Activated CD4-positive, alpha-beta T cell treated with anti-CD3 and anti-CD28 coated beads for 36 hours (primary cell): ENCODE measurements at regions of chr3 and their contacts with region 1.

Region 1: GRCh38 chr3:72692990-72693389 is 155.3 kb downstream of the SHQ1 start:
- DNase-seq: no peak
- ATAC-seq: no peak
- H3K4me3 Mint-ChIP-seq: no peak overlapping the region
- H3K27ac Mint-ChIP-seq: no peak overlapping the region
- H3K4me1 Mint-ChIP-seq: no peaks in the 10 kb centered on the region
- H3K27me3 Mint-ChIP-seq: no peaks in the 10 kb centered on the region

Region 2: GRCh38 chr3:72203105-72203504 is 489.9 kb before region 1 on chr3:
- CTCF ChIA-PET with region 1: no interaction called
- POLR2A ChIA-PET with region 1: interaction called, 13 read pairs
- intact Hi-C with region 1: no loop called
- DNase-seq: no peak
- ATAC-seq: no peak
- H3K4me3 Mint-ChIP-seq: no peak overlapping the region
- H3K27ac Mint-ChIP-seq: no peak overlapping the region
- H3K4me1 Mint-ChIP-seq: no peaks in the 10 kb centered on the region
- H3K27me3 Mint-ChIP-seq: peaks cover 3% of the 10 kb centered on the region

Region 3: DNA sequence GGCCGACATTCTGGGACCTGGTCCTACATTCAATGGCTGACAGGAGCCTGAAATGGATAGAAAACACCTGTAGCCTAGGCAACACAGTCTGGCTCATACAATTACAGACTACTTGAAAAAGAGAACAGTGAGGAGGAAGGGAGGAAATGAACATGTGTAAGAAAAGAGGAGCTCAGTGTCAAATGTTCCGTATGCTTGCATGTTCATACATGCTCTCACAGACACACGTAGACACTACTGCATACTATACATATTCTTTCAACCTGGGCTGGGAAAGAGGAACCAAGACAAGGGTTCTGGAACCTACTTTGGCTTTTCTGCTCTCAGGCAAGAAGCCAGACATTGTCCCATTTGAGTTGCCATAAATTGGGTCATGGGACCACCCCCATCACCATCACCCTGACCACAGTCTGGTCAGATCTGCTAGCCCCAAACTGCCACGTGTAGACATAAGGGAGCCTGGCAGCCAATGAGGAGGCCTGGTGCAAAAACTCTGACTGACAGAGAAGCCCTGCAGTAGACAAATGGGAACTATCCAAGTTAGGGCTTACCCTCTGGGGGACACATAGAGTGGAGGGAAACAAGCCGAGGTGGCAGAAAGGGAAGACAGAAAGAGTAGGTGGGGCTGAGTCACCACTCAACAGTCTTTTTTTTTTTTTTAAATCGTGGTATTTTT is 154.8 kb before region 1 on chr3:
- CTCF ChIA-PET with region 1: no interaction called
- POLR2A ChIA-PET with region 1: no interaction called
- intact Hi-C with region 1: no loop called
- DNase-seq: peak; percentile 27
- ATAC-seq: peak; percentile 74
- H3K4me3 Mint-ChIP-seq: no peak overlapping the region
- H3K27ac Mint-ChIP-seq: no peak overlapping the region
- H3K4me1 Mint-ChIP-seq: peaks cover 31% of the 10 kb centered on the region
- H3K27me3 Mint-ChIP-seq: peaks cover 13% of the 10 kb centered on the region

Region 4: DNA sequence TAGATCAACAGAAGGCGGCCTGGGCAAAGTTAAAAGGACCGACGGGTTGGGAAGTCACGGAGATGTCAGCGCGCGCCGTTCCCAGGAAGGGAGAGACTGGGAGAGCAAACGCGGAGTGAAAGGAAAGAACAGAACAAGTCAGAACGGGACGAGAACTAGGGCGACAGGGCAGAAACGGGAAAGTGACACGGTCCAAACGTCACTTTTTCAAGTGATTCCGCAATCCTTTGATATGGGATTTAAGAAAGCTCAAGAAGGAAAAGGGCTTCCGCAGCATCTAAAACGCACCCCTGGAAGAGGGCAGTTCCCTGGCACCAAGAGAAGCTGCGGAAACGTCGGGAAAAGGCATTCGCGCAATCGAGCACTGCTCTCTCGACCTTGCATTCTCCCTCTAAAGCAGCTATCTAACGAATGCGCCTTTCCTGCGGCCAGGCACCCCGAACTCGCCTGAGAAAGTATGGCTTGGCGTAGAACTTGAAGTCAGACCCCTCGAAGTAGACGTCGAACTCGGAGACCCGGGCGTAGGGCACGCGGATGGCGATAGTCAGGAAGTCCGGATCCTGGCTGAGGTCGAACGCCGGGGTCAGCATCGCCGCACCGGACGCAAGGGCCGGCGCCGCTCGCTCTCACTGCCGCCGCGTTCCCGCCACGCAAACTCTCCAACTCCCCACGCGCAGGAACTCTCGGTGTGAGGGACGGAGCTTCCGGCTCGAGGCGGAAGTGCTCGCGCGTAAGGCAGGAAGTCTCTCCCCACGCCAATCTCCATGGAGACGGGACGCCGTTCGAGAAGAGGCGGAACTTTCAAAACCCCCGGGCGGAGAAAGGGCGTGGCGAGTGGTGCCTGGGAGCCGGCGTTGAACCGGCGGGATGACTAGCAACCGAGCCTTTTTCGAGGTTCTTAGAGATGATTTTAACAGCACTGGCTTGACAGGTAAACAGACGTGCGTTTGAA is 155.0 kb after region 1 on chr3 and contains the start of gene SHQ1:
- CTCF ChIA-PET with region 1: no interaction called
- POLR2A ChIA-PET with region 1: no interaction called
- intact Hi-C with region 1: no loop called
- DNase-seq: peak; percentile 98
- ATAC-seq: peak; percentile 90
- H3K4me3 Mint-ChIP-seq: peak within 1 kb of the TSS; percentile 99
- H3K27ac Mint-ChIP-seq: peak within 1 kb of the TSS; percentile 86
- H3K4me1 Mint-ChIP-seq: peaks cover 54% of the 10 kb centered on the region
- H3K27me3 Mint-ChIP-seq: peaks cover 1% of the 10 kb centered on the region
- total RNA-seq, gene SHQ1: 26.4 to 31.3 TPM

Region 5: GRCh38 chr3:72977060-72977808 is 284.2 kb after region 1 on chr3:
- CTCF ChIA-PET with region 1: no interaction called
- POLR2A ChIA-PET with region 1: no interaction called
- intact Hi-C with region 1: no loop called
- DNase-seq: peak; percentile 52
- ATAC-seq: peak; percentile 84
- H3K4me3 Mint-ChIP-seq: no peak overlapping the region
- H3K27ac Mint-ChIP-seq: peak overlapping the region; percentile 84
- H3K4me1 Mint-ChIP-seq: peaks cover 19% of the 10 kb centered on the region
- H3K27me3 Mint-ChIP-seq: peaks cover 3% of the 10 kb centered on the region

Region 6: GRCh38 chr3:73080216-73080966 is 387.4 kb after region 1 on chr3:
- CTCF ChIA-PET with region 1: no interaction called
- POLR2A ChIA-PET with region 1: no interaction called
- intact Hi-C with region 1: no loop called
- DNase-seq: peak; percentile 55
- ATAC-seq: peak; percentile 69
- H3K4me3 Mint-ChIP-seq: no peak overlapping the region
- H3K27ac Mint-ChIP-seq: peak overlapping the region; percentile 20
- H3K4me1 Mint-ChIP-seq: peaks cover 9% of the 10 kb centered on the region
- H3K27me3 Mint-ChIP-seq: no peaks in the 10 kb centered on the region